H1 (cell line): ENCODE measurements at regions of chr14 and their contacts with region 1.

Region 1: DNA sequence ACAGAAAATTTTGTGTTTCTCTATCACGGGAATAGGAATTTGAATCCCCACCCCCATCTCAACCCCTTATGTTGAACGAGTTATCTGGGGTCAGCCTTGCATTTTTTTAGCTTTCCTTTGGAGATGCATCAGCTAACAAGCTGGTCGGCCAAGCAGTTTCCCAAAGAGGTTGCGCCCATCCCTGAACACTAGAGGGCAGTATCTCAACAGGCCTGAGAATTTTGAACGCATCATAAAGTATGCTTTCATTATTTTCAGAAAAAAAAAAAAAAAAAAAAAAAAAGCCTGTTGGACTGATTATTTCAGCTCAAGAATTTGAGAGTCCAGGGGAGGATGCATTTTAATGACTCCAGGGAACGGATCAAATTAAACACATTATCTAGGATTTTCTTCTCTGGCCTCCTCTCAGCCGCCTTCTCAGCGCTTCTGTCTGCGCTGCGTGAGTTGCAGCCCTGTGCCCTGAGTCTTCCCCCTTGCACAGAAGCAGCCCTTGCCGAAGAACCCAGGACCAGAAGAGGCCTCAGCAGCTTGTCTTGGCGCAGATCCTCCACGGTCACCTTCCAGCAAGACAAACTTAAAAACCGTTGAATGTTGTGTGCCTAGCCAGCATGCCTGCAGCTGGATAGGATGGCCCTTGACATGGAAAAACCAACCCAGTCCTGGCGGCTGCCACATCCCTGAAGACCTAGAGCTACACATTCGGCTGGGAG is 76.6 kb upstream of the GZMB start:
- DNase-seq: peak in 1 of 2 experiments; percentile 67
- H3K4me3 ChIP-seq: no peak overlapping the region
- H3K27ac ChIP-seq: no peak overlapping the region
- H3K4me1 ChIP-seq: no peaks in the 10 kb centered on the region
- H3K27me3 ChIP-seq: no peaks in the 10 kb centered on the region
- CTCF ChIP-seq: peak; percentile 66 to 68 (median 66)
- EP300 ChIP-seq: no peak
- POLR2A ChIP-seq: no peak
- RAD21 ChIP-seq: peak; percentile 76 to 81

Region 2: DNA sequence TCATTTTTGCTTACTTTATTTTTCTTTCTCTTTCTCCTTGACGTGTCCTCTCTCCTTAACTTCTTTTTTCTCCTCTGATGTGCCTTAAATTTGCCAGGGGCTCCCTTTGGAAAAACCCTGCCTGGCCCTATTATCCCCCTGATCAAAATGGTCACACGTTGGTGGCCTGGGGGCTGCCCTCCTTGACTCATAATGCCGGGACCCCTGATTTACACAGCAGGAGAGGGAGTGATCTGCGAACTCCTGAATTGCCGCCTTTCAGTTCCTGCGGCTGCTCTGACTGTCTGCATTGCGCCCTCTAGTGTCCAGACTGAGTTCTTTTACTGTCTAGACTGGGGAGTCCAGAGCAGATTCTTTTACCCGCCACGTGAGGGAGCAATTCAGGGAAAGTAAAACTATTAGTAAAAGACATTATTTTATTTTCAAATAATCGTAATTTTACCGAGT is 31.7 kb before region 1 on chr14:
- CTCF ChIA-PET with region 1: interaction called, 12 read pairs
- POLR2A ChIA-PET with region 1: no interaction called
- DNase-seq: peak; percentile 51 to 69
- H3K4me3 ChIP-seq: peak overlapping the region in 1 of 4 experiments; percentile 41; a peak in 1 of 8 replicates
- H3K27ac ChIP-seq: no peak overlapping the region
- H3K4me1 ChIP-seq: peaks cover 0 to 1% (median 0%) of the 10 kb centered on the region in 4 experiments; a peak in 1 of 7 replicates
- H3K27me3 ChIP-seq: no peaks in the 10 kb centered on the region
- CTCF ChIP-seq: peak; percentile 79 to 99 (median 94)
- EP300 ChIP-seq: peak in 1 of 2 experiments; percentile 42; a peak in 1 of 3 replicates
- POLR2A ChIP-seq: no peak
- RAD21 ChIP-seq: peak; percentile 73 to 78

Region 3: DNA sequence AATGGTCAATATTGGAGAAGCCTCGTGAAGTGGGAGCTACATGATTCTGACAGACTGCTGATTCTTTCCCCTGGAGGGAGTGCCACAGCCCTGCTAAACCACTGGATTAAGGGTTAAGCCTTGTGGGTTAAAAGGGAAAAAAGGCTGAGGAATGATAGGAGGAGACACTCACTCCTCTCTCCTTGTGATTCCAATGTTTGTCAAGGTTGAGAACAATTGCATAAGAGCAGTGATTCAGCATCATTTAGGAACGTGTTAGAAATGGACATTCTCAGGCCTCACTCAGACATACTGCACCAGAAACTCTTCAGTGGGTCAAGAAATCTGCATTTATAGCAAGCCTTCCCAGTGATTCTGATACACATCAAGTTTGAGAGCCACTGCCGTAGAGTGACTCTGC is 11.2 kb after region 1 on chr14:
- CTCF ChIA-PET with region 1: interaction called, 34 read pairs
- POLR2A ChIA-PET with region 1: no interaction called
- DNase-seq: no peak
- H3K4me3 ChIP-seq: no peak overlapping the region
- H3K27ac ChIP-seq: no peak overlapping the region
- H3K4me1 ChIP-seq: no peaks in the 10 kb centered on the region
- H3K27me3 ChIP-seq: no peaks in the 10 kb centered on the region
- CTCF ChIP-seq: no peak
- EP300 ChIP-seq: no peak
- POLR2A ChIP-seq: no peak
- RAD21 ChIP-seq: no peak

Region 4: GRCh38 chr14:24848102-24848820 is 137.7 kb after region 1 on chr14:
- CTCF ChIA-PET with region 1: no interaction called
- POLR2A ChIA-PET with region 1: no interaction called
- DNase-seq: no peak
- H3K4me3 ChIP-seq: no peak overlapping the region
- H3K27ac ChIP-seq: no peak overlapping the region
- H3K4me1 ChIP-seq: peaks cover 0 to 14% (median 8%) of the 10 kb centered on the region in 4 experiments; a peak in 5 of 7 replicates
- H3K27me3 ChIP-seq: no peaks in the 10 kb centered on the region
- CTCF ChIP-seq: no peak
- EP300 ChIP-seq: no peak
- POLR2A ChIP-seq: no peak
- RAD21 ChIP-seq: no peak

Region 5: GRCh38 chr14:25132732-25133422 is 422.3 kb after region 1 on chr14:
- CTCF ChIA-PET with region 1: interaction called, 19 read pairs
- POLR2A ChIA-PET with region 1: no interaction called
- DNase-seq: peak; percentile 60 to 78
- H3K4me3 ChIP-seq: peak overlapping the region in 1 of 4 experiments; percentile 28; a peak in 2 of 8 replicates
- H3K27ac ChIP-seq: no peak overlapping the region
- H3K4me1 ChIP-seq: no peaks in the 10 kb centered on the region
- H3K27me3 ChIP-seq: peaks cover 0 to 8% (median 5%) of the 10 kb centered on the region in 4 experiments; a peak in 3 of 7 replicates
- CTCF ChIP-seq: peak; percentile 75 to 87 (median 80)
- EP300 ChIP-seq: no peak
- POLR2A ChIP-seq: no peak
- RAD21 ChIP-seq: peak; percentile 78 to 81

Region 6: GRCh38 chr14:25406818-25407217 is 696.3 kb after region 1 on chr14:
- CTCF ChIA-PET with region 1: interaction called, 17 read pairs
- POLR2A ChIA-PET with region 1: no interaction called
- DNase-seq: peak; percentile 47 to 61
- H3K4me3 ChIP-seq: no peak overlapping the region
- H3K27ac ChIP-seq: no peak overlapping the region
- H3K4me1 ChIP-seq: no peaks in the 10 kb centered on the region
- H3K27me3 ChIP-seq: no peaks in the 10 kb centered on the region
- CTCF ChIP-seq: peak in 2 of 3 experiments; percentile 54 to 69; a peak in 3 of 4 replicates
- EP300 ChIP-seq: no peak
- POLR2A ChIP-seq: no peak
- RAD21 ChIP-seq: peak; percentile 73 to 79